Gastrocnemius medialis (tissue), 4 donors: ENCODE measurements at regions of chr3 and their contacts with region 1.

Region 1: GRCh38 chr3:149858911-149859310 is 45.9 kb downstream of the RNF13 start:
- DNase-seq: no peak
- ATAC-seq: no peak
- H3K4me3 ChIP-seq: no peak overlapping the region
- H3K27ac ChIP-seq: no peak overlapping the region
- H3K4me1 ChIP-seq: no peaks in the 10 kb centered on the region
- H3K27me3 ChIP-seq: no peaks in the 10 kb centered on the region
- CTCF ChIP-seq: no peak
- POLR2A ChIP-seq: no peak

Region 2: DNA sequence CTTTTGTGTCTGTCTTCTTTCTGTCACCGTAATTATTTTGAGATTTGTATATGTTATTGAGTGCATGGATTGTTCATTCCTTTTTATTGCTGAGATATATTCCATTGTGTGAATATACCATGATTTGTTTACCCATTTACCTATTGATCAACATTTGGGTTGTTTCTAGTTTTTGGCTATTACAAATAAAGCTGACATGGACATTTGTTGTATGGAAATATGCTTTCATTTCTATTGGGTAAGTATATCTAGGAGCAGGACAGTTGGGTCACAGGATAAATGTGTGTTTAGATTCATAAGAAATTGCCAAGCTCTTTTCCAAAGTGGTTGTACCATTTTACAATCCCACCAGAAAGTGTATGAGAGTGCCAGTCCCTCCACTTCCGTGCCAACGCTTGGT is 60.6 kb after region 1 on chr3:
- in situ Hi-C with region 1: no loop called
- intact Hi-C with region 1: loop called (anchors 2 kb)
- DNase-seq: no peak
- ATAC-seq: no peak
- H3K4me3 ChIP-seq: no peak overlapping the region
- H3K27ac ChIP-seq: no peak overlapping the region
- H3K4me1 ChIP-seq: no peaks in the 10 kb centered on the region
- H3K27me3 ChIP-seq: no peaks in the 10 kb centered on the region
- CTCF ChIP-seq: no peak
- POLR2A ChIP-seq: no peak